Dendritic cell treated with granulocyte-macrophage colony-stimulating factor and Interleukin-4, amounts not matched to agents 40 ng/mL and 50 ng/mL, for 4 days (primary cell): ENCODE measurements at regions of chr19 and their contacts with region 1.

Region 1: DNA sequence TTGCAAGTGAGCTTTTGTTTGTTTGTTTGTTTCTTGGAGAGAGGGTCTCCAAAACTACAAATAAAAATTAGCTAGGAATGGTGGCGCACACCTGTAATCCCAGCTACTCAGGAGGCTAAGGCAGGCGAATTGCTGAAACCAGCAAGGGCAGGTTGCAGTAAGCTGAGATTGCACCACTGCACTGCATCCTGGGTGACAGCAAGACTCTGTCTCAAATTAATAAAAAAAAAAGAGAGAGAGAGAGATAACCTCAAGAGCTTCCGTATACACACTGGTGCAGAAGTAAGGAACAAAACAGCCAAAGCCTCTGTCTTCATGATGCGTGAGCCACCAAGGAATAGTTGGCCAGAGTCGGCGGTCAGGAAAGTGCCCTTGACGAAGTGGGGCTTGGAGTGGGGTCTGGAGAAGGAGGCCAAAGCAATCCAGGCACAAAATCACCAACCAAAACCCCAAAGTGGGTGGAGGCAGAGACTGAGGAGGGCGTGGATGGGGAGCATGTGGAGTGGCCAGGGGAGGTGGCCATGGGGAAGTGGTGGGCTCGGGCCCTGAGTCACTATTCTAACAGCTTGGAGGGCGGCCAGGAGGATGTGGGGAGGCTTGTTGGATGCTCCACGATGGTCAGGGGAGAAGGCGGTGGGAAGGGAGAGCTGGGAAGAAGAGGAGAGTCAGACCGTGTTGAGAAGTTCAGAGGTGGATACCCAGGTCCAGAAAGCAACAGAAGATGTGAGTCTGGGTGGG is 21.2 kb upstream of the TOMM40 start:
- H3K4me3 Mint-ChIP-seq: peak overlapping the region; percentile 7
- H3K27ac Mint-ChIP-seq: peak overlapping the region; percentile 81
- H3K4me1 Mint-ChIP-seq: peaks cover 50% of the 10 kb centered on the region
- H3K27me3 Mint-ChIP-seq: no peaks in the 10 kb centered on the region

Region 2: DNA sequence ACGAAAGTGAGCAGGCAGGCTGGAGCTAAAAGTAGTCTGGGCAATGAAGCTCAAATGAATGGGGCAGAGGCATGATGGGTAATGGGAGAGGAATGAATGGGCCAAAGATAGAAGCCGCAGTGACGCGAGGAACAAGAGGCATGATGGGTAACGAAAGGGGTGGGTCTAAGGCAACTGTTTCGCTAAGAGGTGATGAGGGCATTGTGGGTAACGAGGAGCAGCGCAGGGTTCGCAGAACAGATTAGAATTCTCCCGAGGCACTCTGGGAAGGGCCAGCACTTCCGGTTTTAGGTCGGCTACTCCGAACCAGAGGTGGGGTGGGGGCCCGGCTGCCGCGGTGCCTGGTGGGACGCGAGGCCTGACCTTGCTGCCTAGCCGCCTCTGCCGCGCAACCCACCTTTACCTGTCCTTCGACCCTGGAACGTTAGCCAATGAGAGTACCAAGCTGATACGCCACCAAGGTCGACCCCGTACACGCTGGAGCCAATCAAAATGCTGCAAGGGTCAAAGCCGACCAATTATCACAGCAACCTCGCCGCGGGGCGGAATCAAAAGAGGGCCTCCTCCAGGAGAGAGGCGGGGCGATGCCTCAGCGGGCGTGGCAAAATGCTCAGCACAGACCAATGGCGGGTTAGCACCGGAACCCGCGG is 20.6 kb after region 1 on chr19:
- intact Hi-C with region 1: loop called (anchors 1 kb)
- H3K4me3 Mint-ChIP-seq: peak overlapping the region; percentile 80
- H3K27ac Mint-ChIP-seq: peak overlapping the region; percentile 87
- H3K4me1 Mint-ChIP-seq: peaks cover 35% of the 10 kb centered on the region
- H3K27me3 Mint-ChIP-seq: no peaks in the 10 kb centered on the region

Region 3: DNA sequence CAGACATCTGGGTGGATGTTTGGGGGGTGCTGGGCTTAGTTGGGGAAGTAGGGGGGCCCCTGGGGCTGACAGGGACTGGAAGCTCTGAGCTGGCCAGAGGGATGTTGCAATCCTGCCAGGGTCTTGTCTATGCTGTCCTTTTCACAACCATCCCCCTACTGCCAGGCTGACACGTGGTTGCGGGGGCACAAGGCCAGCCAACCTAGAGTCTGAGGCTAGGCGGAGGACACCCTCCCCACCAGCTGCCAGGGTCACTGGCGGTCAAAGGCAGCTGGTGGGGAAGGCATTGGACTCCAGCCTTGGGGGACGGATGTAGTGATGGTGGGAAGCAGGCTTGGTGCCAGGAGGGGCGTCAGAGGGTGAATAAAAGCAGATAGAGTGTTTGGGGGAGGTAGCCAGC is 43.0 kb after region 1 on chr19:
- intact Hi-C with region 1: no loop called
- H3K4me3 Mint-ChIP-seq: no peak overlapping the region
- H3K27ac Mint-ChIP-seq: peak overlapping the region; percentile 93
- H3K4me1 Mint-ChIP-seq: peaks cover 46% of the 10 kb centered on the region
- H3K27me3 Mint-ChIP-seq: peaks cover 11% of the 10 kb centered on the region